ENCODE measurements at regions of chr5 and their contacts with region 1.

Region 1: GRCh38 chr5:57499262-57500050 is 16.8 kb upstream of the ACTBL2 start:
- DNase-seq: no peak
- H3K4me3 ChIP-seq: no peak overlapping the region
- H3K27ac ChIP-seq: no peak overlapping the region
- H3K27me3 ChIP-seq: no peaks in the 10 kb centered on the region
- CTCF ChIP-seq: peak; percentile 77

Region 2: DNA sequence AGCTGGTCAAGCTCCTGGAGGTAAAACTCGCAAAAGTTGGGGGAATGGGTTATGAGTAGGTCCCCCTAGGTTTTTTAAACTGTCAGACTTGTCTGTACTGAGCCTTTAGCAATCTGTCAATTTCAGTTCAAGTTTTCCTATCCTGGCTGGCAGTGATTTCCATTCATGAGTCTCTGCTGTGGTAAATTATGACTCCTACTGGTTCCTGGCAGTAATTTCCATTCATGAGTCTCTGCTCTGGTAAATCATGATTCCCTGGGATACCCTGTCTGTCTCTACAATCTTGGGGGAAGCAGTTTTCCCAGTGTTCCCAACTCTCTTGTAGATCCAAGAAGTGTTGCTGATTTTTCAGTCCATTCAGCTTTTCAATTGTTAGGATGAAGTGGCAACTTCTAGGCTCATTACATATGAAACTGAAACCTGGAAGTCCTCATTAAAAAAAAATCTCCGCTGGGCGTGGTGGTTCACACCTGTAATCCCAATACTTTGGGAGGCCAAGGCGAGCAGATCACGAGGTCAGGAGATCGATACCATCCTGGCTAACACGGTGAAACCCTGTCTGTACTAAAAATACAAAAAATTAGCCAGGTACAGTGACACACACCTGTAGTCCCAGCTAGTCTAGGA is 416.9 kb before region 1 on chr5:
- CTCF ChIA-PET with region 1: no interaction called
- POLR2A ChIA-PET with region 1: no interaction called
- DNase-seq: no peak
- H3K4me3 ChIP-seq: no peak overlapping the region
- H3K27ac ChIP-seq: no peak overlapping the region
- H3K27me3 ChIP-seq: no peaks in the 10 kb centered on the region
- CTCF ChIP-seq: peak; percentile 34

Region 3: DNA sequence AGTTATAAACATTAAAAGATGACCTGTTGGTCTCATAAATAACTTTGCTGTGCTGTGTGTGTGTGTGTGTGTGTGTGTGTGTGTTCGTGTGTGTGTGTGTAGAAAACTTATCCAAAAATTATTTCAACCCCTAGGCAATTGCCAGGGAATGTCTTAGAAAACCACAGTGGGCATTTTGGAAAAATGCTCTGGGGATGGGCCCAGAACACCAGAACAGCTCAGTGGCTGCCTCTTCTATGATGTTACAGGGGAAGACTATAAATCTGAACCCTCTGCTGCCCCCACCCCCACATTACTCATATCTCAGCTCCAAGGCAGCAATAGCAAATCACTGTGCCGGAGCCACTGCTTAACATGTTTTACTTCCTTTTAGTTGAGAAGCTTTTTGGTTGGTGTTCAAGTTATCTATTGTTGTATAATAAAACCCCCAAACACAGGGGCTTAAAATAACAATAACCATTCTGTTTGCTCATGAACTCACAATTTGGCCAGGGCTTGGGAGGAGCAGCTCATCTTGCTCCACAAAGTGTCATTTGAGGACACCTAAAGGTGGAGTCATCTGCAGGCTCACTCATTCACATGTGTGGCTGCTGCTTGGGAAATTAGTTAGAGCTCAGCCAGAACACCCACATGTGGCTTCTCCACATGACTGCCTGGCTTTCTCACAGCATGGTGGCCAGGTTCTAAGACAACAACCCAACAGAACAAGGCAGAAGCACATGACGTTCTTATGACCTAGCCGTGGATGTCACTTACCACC is 57.2 kb before region 1 on chr5:
- CTCF ChIA-PET with region 1: interaction called, 3 read pairs
- POLR2A ChIA-PET with region 1: interaction called, 10 read pairs
- DNase-seq: peak; percentile 84
- H3K4me3 ChIP-seq: no peak overlapping the region
- H3K27ac ChIP-seq: peak overlapping the region; percentile 97
- H3K27me3 ChIP-seq: no peaks in the 10 kb centered on the region
- CTCF ChIP-seq: no peak

Region 4: GRCh38 chr5:57509501-57510260 is 10.2 kb after region 1 on chr5:
- CTCF ChIA-PET with region 1: interaction called, 15 read pairs
- POLR2A ChIA-PET with region 1: no interaction called
- DNase-seq: no peak
- H3K4me3 ChIP-seq: no peak overlapping the region
- H3K27ac ChIP-seq: no peak overlapping the region
- H3K27me3 ChIP-seq: no peaks in the 10 kb centered on the region
- CTCF ChIP-seq: no peak

Region 5: DNA sequence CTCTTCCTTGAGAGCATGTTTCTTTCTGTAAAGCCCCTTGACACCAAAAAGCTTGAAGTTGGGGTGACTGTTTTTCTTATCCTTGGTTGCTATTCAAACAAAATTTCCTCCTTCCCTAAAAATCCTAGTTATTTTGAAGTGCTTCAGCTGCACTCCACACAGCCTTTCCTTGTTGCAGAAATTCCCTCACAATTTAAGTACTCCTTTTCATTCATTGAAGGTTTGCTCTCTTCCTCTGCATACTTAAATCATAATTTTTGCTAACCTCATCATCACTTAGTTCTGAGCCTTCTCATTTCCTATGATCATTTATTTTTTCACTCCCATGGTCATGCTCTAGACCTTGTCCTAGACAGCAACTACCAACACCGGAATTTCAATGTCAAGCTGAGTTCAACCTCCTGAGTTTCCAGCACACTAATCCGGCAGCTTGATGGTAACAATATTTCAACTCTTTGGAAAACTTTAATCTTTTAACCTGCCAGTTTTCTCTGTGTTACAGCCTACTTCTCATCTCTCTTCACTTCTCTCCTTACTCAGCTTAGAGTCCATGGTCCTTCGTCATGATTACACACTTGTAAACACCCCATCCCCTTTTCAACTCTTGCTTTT is 61.9 kb after region 1 on chr5:
- CTCF ChIA-PET with region 1: no interaction called
- POLR2A ChIA-PET with region 1: no interaction called
- DNase-seq: no peak
- H3K4me3 ChIP-seq: no peak overlapping the region
- H3K27ac ChIP-seq: no peak overlapping the region
- H3K27me3 ChIP-seq: no peaks in the 10 kb centered on the region
- CTCF ChIP-seq: no peak

Region 6: DNA sequence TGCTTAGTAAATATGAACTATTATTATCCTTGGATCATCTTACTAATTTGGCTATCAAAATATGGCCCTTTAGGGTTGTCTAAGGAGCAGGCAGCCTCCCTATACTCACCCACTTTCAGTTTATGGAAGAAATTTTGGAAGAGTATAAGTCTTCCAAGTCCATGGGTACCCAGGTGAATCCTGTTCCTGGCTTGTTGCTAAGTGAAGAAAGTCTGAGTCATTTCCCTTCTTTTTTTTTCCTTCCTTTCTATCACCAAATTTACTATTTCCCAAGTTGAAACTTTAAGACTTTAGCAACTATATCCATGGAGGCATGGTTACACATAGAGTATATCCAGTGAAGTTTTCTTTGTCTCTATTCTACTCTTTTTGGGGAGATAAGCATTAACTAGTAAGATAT is 167.1 kb after region 1 on chr5:
- CTCF ChIA-PET with region 1: no interaction called
- POLR2A ChIA-PET with region 1: no interaction called
- DNase-seq: no peak
- H3K4me3 ChIP-seq: no peak overlapping the region
- H3K27ac ChIP-seq: no peak overlapping the region
- H3K27me3 ChIP-seq: no peaks in the 10 kb centered on the region
- CTCF ChIP-seq: no peak

Region 7: DNA sequence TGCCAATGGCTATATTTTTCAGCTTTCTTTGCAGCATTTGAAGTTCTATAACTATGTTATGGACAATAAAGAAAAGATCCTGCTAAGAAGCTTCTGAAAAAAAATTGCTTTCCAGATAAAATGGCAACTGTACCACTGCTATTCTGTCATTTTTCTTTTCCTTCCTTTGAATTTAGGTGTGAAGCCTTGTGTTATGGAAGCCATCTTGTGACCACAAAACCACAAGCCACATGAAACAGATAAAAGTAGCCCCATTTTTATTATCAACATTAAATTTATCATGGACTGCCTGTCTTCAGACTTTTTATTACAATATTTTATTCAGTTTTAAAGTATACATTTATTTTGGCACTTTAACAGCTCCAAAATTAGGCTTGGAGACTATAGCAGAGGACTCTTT is 273.1 kb after region 1 on chr5:
- CTCF ChIA-PET with region 1: interaction called, 83 read pairs
- POLR2A ChIA-PET with region 1: no interaction called
- DNase-seq: no peak
- H3K4me3 ChIP-seq: no peak overlapping the region
- H3K27ac ChIP-seq: no peak overlapping the region
- H3K27me3 ChIP-seq: no peaks in the 10 kb centered on the region
- CTCF ChIP-seq: no peak

Region 8: GRCh38 chr5:58114324-58114723 is 614.9 kb after region 1 on chr5:
- CTCF ChIA-PET with region 1: no interaction called
- POLR2A ChIA-PET with region 1: no interaction called
- DNase-seq: peak; percentile 21
- H3K4me3 ChIP-seq: no peak overlapping the region
- H3K27ac ChIP-seq: no peak overlapping the region
- H3K27me3 ChIP-seq: no peaks in the 10 kb centered on the region
- CTCF ChIP-seq: no peak

Measured in AG04450 (cell line).